ENCODE measurements at regions of chr6 and their contacts with region 1.

Region 1: DNA sequence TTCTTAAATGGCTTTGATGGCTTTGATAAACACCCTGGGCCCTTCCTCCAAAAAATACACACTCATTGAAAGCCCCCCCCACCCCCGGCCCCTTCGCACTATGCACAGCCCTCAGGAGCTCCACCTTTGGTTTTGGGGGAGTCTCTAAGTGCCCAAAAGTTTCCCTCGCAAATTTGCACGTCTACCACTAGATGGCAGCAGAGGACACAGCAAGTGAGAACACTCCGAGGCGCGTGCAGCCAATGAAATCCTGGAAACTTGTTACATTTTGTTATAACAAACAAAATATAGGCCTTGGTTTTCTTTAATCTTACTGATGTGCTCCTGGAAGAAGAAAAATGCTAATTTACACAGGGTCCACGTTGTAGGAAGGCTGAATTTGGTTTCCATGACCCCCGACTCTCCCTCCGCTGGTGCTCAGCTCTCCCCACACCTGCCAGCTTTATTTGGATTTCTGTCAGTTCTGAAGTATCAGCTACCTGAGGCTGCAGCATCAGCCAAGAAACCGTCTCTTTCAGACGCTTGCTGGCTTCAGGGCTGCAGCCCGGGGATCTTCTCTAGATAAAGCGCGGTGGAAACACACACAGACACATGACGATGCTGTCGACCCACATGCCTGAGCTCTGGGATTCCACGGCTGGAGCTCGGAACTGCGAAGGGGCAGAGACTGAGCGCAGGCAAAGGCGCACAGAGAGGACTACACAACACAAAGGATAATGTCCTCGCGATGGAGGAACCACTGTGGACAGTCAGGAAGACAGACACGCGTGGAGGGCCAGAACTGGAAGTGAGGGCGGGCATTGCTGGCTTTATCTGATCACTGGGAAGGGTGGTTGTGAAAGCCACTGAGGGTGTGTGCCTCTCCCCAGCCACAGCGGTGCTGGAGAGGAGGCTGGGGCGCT is 148.4 kb upstream of the RPS6KA2 start:
- DNase-seq: peak; percentile 44
- H3K4me3 Mint-ChIP-seq: no peak overlapping the region
- H3K27ac Mint-ChIP-seq: no peak overlapping the region
- H3K4me1 Mint-ChIP-seq: peaks cover 5% of the 10 kb centered on the region
- H3K27me3 Mint-ChIP-seq: peaks cover 3% of the 10 kb centered on the region

Region 2: DNA sequence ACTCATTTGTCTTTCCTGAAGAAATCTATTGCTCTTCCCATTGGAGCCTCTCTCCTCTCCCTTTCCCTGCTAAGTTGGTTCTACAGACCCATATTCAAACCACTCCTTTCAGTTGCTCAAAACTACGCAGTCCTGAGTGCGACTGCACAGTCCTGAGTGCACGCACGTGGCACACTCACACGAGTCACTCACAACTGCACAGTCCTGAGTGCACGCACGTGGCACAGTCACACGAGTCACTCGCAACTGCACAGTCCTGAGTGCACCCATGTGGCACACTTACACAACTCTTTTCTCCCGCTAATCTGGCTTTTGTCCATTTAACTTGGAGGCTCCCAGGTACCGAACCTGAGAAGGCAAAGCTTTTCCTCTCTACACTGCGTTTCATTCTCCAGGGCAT is 21.2 kb after region 1 on chr6:
- intact Hi-C with region 1: no loop called
- DNase-seq: no peak
- H3K4me3 Mint-ChIP-seq: no peak overlapping the region
- H3K27ac Mint-ChIP-seq: no peak overlapping the region
- H3K4me1 Mint-ChIP-seq: no peaks in the 10 kb centered on the region
- H3K27me3 Mint-ChIP-seq: peaks cover 2% of the 10 kb centered on the region

Region 3: DNA sequence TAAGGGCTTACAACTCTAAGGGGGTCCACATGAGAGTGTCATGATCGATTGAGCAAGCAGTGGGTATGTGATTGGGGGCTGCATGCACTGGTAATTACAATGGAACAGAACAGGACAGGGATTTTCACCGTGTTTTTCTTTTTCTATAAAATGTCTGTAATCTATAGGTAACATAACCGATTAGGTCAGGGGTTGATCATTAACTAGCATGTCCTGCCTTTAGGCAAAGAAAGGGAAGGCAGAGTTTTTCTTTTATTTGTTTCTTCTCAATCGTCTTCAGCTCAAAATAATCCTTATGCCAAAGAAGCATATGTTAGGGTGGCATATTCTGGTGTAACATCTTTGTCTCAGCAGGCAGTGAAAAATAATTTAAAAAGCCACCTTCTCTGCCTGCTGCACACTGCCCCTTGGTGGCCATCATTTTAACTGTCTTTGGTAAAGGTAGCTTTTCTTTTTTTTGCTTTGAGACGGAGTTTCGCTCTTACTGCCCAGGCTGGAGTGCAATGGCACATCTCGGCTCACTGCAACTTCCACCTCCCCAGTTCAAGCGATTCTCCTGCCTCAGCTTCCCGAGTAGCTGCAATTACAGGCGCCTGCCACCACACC is 214.1 kb after region 1 on chr6:
- intact Hi-C with region 1: loop called (anchors 1 kb)
- DNase-seq: peak; percentile 39
- H3K4me3 Mint-ChIP-seq: no peak overlapping the region
- H3K27ac Mint-ChIP-seq: no peak overlapping the region
- H3K4me1 Mint-ChIP-seq: peaks cover 46% of the 10 kb centered on the region
- H3K27me3 Mint-ChIP-seq: peaks cover 1% of the 10 kb centered on the region

Region 4: DNA sequence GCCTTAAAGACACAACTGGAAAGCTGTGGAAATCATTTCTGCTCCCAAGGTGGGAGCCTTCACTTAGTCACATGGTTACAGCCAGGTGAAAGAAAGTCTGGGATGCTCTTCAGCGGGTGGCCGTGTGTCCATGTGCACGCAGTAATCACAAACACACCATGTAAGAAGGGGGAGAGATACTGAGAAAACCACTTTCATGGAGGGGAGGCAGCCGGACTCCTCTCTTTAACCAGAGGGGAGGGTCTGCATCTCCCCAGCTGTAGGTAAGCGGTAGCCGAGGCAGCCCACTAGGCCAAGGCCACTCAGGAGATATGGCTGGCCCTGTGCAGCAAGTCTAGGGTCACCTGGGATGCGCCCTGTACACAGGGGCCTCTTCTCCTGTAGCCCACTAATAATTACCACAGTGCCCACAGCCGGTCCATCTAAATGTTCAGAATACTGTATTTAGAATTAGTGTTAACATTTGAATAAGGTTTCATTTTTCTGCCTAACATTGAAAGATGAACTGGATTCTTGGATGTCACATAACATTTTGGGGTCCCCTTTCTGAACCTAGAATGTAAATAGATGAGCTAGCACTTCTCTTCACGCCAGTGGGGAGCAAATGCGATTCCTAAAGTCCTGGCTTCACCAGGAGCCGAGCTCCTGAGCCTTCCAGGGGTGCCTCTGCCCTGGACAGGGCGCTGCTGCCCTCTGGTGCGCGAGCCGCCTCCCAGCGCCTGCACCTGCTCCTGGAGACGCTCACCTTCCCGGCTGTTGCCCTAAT is 366.4 kb after region 1 on chr6:
- intact Hi-C with region 1: loop called (anchors 1 kb)
- DNase-seq: peak; percentile 8
- H3K4me3 Mint-ChIP-seq: no peak overlapping the region
- H3K27ac Mint-ChIP-seq: no peak overlapping the region
- H3K4me1 Mint-ChIP-seq: no peaks in the 10 kb centered on the region
- H3K27me3 Mint-ChIP-seq: peaks cover 6% of the 10 kb centered on the region

Region 5: GRCh38 chr6:167287513-167288048 is 512.1 kb after region 1 on chr6:
- intact Hi-C with region 1: loop called (anchors 1 kb)
- DNase-seq: no peak
- H3K4me3 Mint-ChIP-seq: no peak overlapping the region
- H3K27ac Mint-ChIP-seq: no peak overlapping the region
- H3K4me1 Mint-ChIP-seq: no peaks in the 10 kb centered on the region
- H3K27me3 Mint-ChIP-seq: peaks cover 5% of the 10 kb centered on the region

Measured in activated T-helper 1 cell treated with anti-CD3 and anti-CD28 coated beads, Interleukin-12 subunit alpha, Interleukin-12 subunit beta, Interleukin-2, Interleukin-4 antibody, amounts not matched to agents 30 ng/mL and 10 ng/mL and 1 ng/mL, durations not matched to agents 14 hours and 24 hours and 36 hours (primary cell).